ENCODE measurements at regions of chr1 and their contacts with region 1.

Region 1: DNA sequence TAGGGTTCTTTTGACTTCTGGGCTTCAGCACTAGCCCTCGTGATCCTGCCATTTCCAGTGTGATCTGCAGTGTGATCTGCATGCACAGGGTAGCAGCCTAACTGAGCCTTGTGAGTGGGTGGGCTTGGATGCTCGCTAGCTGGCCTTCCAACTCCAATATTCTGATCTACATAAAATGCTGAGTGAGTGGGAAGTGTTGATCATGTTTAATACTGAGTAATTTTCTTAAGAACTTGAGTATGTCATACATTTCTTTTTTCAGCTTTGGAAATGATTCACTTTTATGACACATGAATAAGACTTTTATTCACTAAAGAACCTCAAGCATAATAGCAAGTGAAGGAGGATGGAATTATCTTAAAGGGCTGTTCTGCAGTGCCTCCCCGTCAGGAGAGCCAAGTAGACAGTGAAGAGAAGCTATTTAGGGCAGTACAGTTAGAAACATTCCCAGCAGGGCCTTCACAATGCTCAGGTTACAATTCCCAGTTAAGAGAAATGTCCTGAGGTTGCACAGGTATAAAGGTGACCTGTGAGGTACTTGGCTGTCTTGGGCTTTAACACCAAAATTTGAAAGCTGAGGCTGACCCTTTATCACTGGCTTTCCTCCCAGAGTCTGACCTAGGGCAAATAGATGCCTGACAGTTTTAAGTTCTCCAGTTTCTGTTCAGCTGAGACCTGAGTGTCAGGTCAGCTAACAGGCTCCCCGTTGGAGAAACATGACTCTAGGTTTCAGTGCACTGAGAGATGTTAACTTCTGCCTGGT is 29.1 kb upstream of the LRRC8C start:
- DNase-seq: no peak
- H3K4me3 Mint-ChIP-seq: peak overlapping the region; percentile 56
- H3K27ac Mint-ChIP-seq: peak overlapping the region; percentile 99
- H3K4me1 Mint-ChIP-seq: peaks cover 97% of the 10 kb centered on the region
- H3K27me3 Mint-ChIP-seq: no peaks in the 10 kb centered on the region

Region 2: DNA sequence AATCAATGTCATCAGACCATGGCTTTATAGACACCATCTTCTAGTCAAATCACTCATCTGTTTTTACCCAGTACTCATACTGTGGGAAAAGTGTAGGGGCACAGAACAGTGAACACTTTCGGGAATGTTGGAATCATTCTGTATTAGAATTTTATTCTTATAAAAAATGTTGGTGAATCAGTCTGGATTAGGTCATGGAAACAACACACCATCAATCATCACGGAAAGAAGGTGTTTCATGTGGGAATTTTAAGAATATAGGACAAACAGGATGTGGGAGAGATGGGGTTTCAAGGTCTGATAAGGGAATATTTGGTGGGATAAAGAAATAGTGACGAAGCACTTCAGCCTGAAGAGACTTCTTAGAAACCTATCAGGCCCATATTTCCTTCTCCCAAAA is 556.1 kb before region 1 on chr1:
- intact Hi-C with region 1: loop called (anchors 2 kb)
- DNase-seq: no peak
- H3K4me3 Mint-ChIP-seq: no peak overlapping the region
- H3K27ac Mint-ChIP-seq: no peak overlapping the region
- H3K4me1 Mint-ChIP-seq: peaks cover 18% of the 10 kb centered on the region
- H3K27me3 Mint-ChIP-seq: no peaks in the 10 kb centered on the region

Region 3: DNA sequence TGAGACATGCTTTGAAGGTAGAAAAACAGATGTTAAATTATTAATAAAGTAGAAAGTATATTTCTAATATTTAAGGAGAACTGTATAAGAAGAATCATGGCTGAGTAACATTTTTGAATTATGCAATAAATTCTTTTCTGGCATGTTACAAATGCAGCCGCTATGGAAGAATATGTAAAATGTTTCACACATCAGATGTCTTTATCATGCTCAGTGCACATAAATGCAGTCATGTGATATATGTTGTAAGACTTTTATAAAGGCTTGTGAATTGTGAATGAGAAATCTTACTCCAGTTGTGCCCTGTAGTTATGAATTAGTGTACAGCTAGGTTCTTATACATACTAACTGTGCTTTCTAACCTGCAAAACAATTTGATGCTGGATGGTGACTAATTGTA is 25.7 kb before region 1 on chr1:
- intact Hi-C with region 1: no loop called
- DNase-seq: no peak
- H3K4me3 Mint-ChIP-seq: no peak overlapping the region
- H3K27ac Mint-ChIP-seq: no peak overlapping the region
- H3K4me1 Mint-ChIP-seq: peaks cover 57% of the 10 kb centered on the region
- H3K27me3 Mint-ChIP-seq: no peaks in the 10 kb centered on the region

Region 4: DNA sequence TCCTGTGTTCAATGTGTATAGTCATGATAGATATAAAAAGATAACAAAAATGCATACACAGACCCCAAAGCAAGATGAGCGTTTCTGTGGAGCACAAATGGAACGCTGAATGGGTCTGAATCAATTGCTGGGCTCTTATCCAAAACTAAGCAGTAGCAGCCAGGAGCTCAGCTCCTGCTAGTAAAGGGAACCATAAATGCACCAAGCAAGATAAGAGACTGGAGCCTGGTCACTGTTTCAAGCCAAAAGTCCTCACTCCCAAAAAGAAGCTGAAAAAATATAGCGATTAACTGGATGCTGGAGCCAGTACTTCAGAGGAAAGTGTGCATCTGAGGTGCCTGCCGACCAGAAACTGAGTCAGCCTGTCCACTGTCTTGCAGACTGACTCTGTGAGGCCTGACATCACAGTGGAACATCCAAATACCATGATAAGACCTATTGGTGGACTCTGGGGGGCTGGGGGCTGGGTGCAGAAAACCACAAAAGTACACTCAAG is 98.0 kb after region 1 on chr1:
- intact Hi-C with region 1: no loop called
- DNase-seq: no peak
- H3K4me3 Mint-ChIP-seq: peak overlapping the region; percentile 12
- H3K27ac Mint-ChIP-seq: peak overlapping the region; percentile 72
- H3K4me1 Mint-ChIP-seq: peaks cover 83% of the 10 kb centered on the region
- H3K27me3 Mint-ChIP-seq: no peaks in the 10 kb centered on the region

Measured in activated T-helper 1 cell treated with anti-CD3 and anti-CD28 coated beads, Interleukin-12 subunit alpha, Interleukin-12 subunit beta, Interleukin-2, Interleukin-4 antibody, amounts not matched to agents 30 ng/mL and 10 ng/mL and 1 ng/mL, durations not matched to agents 14 hours and 24 hours and 36 hours (primary cell).